PC-3 (cell line): ENCODE measurements at regions of chr4 and their contacts with region 1.

Region 1: DNA sequence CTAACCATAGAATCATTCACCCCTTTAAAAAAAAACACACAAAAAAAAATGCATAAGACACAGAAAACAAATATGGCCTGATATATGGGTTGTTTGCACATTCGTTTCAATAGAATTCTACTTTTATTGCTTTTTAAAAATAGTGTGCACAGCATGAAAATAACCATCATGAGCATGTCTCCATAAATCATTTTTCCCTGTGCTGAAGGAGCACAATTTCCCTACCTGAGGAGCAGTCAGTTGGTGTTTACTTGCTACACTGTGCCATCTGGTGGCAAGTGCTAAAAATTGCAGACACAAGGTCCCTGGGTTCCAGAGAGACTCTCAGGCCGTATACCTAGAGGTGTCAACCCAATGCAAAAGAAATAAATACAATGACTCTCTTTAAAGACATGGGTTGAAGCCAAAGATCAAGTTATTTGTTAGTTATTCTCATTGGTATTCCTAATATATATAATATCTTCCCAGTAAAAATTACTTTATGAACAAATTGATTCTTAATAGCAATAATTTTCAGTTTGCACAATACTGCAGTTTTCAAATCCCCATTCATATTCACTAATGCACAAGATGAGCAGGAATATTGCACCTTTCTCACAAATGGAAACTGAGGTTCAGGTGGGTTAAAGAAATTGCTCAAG is 551.4 kb downstream of the IQCM start:
- DNase-seq: peak; percentile 61
- ATAC-seq: peak; percentile 77
- H3K4me3 ChIP-seq: no peak overlapping the region
- H3K27ac ChIP-seq: no peak overlapping the region
- H3K4me1 ChIP-seq: no peaks in the 10 kb centered on the region
- H3K27me3 ChIP-seq: no peaks in the 10 kb centered on the region
- CTCF ChIP-seq: peak; percentile 74

Region 2: GRCh38 chr4:148289740-148290139 is 974.5 kb before region 1 on chr4:
- CTCF ChIA-PET with region 1: no interaction called
- POLR2A ChIA-PET with region 1: no interaction called
- intact Hi-C with region 1: loop called (anchors 5 kb)
- DNase-seq: no peak
- ATAC-seq: no peak
- H3K4me3 ChIP-seq: no peak overlapping the region
- H3K27ac ChIP-seq: no peak overlapping the region
- H3K4me1 ChIP-seq: no peaks in the 10 kb centered on the region
- H3K27me3 ChIP-seq: no peaks in the 10 kb centered on the region
- CTCF ChIP-seq: no peak

Region 3: DNA sequence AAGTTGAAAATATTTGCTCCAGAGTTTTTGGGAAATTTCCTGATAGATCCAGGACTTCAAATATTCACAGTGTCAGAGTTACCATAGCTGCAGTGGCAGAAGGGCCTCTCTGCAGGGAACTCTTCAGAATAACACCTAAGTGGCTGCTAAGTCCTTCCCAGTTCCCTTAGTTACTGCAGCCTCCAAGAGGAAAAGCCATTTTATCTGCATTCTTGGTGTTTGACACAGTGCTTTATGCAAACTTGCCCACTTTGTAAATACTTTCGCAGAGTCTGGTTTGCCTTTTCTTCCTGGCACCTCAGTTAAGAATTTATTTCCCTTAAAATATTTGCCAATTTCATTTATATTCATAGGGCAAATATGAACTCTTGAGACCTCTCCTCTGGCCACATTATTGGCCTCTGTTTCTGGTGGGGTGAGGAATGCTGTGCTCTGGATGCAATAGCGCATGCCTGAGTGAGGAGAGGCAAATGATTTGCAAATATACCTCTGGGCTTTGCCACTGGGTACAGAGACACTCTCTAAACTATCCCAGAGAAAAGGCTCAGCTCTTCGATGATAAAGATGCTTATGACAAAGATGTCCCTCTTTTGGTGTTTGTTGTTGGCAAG is 255.7 kb before region 1 on chr4:
- CTCF ChIA-PET with region 1: no interaction called
- POLR2A ChIA-PET with region 1: no interaction called
- intact Hi-C with region 1: loop called (anchors 10 kb)
- DNase-seq: no peak
- ATAC-seq: no peak; the same call in 1 of the 2 replicates
- H3K4me3 ChIP-seq: no peak overlapping the region
- H3K27ac ChIP-seq: no peak overlapping the region
- H3K4me1 ChIP-seq: no peaks in the 10 kb centered on the region
- H3K27me3 ChIP-seq: no peaks in the 10 kb centered on the region
- CTCF ChIP-seq: no peak

Region 4: DNA sequence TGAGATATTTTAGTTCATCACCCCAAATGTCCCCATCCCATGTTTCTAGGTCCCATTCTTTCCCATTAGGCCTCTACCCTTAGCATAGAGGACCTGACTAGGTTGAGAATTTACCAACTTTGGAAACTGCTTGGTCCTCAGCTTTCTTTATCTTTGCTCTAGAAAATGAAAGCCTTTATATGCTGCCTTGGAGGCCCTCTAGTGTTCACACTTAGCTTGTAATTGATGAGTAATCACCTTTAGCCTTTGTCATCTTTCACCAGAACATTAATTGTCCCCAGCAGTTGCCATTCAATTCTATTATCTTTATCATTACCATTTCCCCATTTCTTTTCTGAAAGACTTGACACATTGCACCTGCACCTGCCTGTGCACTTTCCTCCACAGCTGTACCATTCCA is 232.8 kb before region 1 on chr4:
- CTCF ChIA-PET with region 1: no interaction called
- POLR2A ChIA-PET with region 1: no interaction called
- intact Hi-C with region 1: loop called (anchors 10 kb)
- DNase-seq: peak; percentile 32
- ATAC-seq: peak; percentile 35
- H3K4me3 ChIP-seq: no peak overlapping the region
- H3K27ac ChIP-seq: no peak overlapping the region
- H3K4me1 ChIP-seq: no peaks in the 10 kb centered on the region
- H3K27me3 ChIP-seq: no peaks in the 10 kb centered on the region
- CTCF ChIP-seq: peak; percentile 60